Common myeloid progenitor, CD34-positive (primary cell): ENCODE measurements at regions of chrX and their contacts with region 1.

Region 1: GRCh38 chrX:15493118-15493962 is at the start of gene PIR:
- DNase-seq: peak; percentile 69 to 83 (median 80)
- H3K4me3 ChIP-seq: peak within 1 kb of the TSS; percentile 42 to 74 (median 59)
- H3K27ac ChIP-seq: peak within 1 kb of the TSS in 1 of 2 experiments; percentile 56
- H3K4me1 ChIP-seq: peaks cover 0 to 10% (median 4%) of the 10 kb centered on the region in 4 experiments
- H3K27me3 ChIP-seq: peaks cover 0 to 32% (median 0%) of the 10 kb centered on the region in 5 experiments

Region 2: GRCh38 chrX:15564981-15565579 is 71.7 kb after region 1 on chrX:
- CTCF ChIA-PET with region 1: interaction called, 32 read pairs
- POLR2A ChIA-PET with region 1: no interaction called
- DNase-seq: peak; percentile 52 to 70 (median 65)
- H3K4me3 ChIP-seq: no peak overlapping the region
- H3K27ac ChIP-seq: no peak overlapping the region
- H3K4me1 ChIP-seq: peaks cover 0 to 2% (median 0%) of the 10 kb centered on the region in 4 experiments
- H3K27me3 ChIP-seq: peaks cover 0 to 19% (median 0%) of the 10 kb centered on the region in 5 experiments

Region 3: DNA sequence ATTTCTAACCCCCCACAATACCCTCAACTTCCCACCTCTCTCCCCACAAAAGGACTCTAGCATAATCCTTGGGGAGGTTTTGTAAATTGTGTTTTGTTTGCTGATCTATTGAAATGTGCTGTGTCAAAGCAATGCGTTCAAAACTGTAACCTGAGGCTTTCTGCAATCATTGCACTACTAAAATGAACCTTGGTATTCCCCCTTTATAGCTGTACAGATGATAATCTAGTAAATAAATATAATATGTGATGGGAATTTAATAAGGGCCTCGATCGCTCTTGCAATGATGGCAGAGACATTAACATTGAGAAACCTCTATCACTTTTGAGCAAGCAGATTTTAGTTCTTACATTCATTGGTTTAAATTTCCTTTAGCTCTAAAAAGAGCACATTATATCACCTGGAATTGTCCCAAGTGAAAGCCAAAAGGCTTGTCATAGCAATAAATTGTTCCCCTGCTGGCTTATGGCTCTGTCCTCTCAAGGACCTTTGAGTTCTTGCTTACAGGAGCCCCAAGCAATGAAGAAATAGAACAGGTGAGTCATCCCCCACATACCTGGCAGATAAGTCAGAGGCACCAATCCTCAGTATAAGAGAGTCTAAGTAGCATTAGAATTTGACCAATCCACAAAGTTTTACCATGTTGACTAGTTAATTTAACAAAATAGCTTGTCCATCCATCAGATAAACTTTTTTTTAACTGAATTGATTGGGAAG is 125.9 kb after region 1 on chrX:
- CTCF ChIA-PET with region 1: no interaction called
- POLR2A ChIA-PET with region 1: no interaction called
- DNase-seq: no peak
- H3K4me3 ChIP-seq: no peak overlapping the region
- H3K27ac ChIP-seq: no peak overlapping the region
- H3K4me1 ChIP-seq: no peaks in the 10 kb centered on the region
- H3K27me3 ChIP-seq: peaks cover 0 to 39% (median 0%) of the 10 kb centered on the region in 5 experiments